ENCODE measurements at regions of chr12 and their contacts with region 1.

Region 1: DNA sequence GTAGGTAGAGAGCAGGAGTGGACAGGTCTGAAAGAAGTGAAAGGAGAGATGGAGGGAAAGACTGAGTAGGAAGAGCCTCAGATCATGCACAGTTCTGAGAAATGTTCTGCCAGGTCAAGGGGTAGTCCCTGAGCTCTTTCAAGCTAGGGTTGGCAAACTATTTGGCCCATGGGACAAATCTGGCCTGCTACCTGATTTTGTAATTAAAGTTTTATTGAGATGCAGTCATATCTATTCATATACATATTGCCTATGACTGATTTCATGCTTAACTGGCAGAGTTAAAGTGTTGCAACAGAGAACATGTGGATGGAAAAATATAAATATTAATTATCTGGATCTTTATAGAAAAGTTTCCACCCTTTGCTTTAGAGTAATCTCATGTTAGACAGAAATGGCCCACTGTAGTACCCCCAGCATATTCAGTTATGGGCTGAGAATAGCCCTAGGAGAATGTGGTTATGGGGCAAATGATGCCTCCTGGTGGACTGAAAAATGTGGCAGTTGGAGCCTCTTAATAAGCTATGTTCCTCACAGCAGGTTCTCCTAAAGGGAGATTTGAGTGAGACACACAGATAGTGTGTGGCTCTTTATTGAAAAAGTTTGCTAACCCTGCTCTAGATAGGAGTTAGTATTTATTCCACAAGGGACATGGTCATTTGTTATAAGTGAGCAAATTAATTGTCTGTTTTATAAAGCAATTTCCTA is 476.9 kb downstream of the LRIG3 start:
- DNase-seq: peak; percentile 48
- H3K4me3 Mint-ChIP-seq: no peak overlapping the region
- H3K27ac Mint-ChIP-seq: no peak overlapping the region
- H3K4me1 Mint-ChIP-seq: no peaks in the 10 kb centered on the region
- H3K27me3 Mint-ChIP-seq: no peaks in the 10 kb centered on the region
- CTCF ChIP-seq: peak; percentile 45

Region 2: DNA sequence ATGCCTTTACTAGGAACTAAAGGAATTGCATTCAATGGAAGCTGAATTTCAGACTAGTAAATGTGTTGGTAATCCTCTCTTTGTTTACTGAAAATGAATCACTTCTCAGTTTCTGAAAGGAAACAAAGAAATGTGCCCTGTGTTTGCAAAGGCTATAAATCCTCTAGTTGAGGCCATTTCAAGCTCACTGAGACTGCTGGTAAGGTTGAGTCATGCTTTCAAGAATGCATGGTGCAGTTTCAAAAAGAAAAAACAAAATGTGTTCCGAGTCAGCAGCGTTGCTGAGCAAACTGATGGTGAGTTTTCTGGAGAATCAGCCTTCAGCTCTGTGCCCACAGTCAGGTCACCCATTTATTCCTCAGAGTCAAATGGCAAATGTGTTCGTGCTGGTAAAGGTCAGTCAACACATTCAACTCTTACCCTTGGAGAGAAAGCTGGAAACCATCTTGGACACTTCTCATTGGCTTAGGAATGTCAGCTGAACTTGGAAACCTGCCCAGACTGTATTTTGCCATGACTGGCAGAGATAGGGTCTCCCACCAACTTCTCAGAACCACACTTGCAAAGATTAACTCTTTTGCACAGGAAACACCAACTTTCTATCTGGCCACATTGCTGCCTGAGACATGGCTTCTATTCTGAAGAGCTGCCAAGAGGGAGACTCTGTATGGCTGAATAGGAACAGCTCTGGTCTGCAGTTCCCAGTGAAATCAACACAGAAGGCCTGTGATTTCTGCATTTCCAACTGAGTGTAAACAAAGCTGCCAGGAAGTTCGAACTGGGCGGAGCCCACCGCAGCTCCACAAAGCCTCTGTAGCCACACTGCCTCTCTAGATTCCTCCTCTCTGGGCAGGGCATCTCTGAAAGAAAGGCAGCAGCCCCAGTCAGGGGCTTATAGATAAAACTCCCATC is 17.7 kb before region 1 on chr12:
- CTCF ChIA-PET with region 1: interaction called, 12 read pairs
- intact Hi-C with region 1: no loop called
- DNase-seq: peak; percentile 62
- H3K4me3 Mint-ChIP-seq: peak overlapping the region; percentile 53
- H3K27ac Mint-ChIP-seq: peak overlapping the region; percentile 70
- H3K4me1 Mint-ChIP-seq: peaks cover 42% of the 10 kb centered on the region
- H3K27me3 Mint-ChIP-seq: no peaks in the 10 kb centered on the region
- CTCF ChIP-seq: no peak